Caco-2 (cell line): ENCODE measurements at regions of chr2 and their contacts with region 1.

Region 1: GRCh38 chr2:173965329-173966025 is at the start of gene SP3:
- DNase-seq: peak; percentile 97 to 98
- H3K4me3 ChIP-seq: peak within 1 kb of the TSS; percentile 98
- H3K4me3 Mint-ChIP-seq: peak within 1 kb of the TSS; percentile 98
- H3K27ac Mint-ChIP-seq: peak within 1 kb of the TSS; percentile 91
- H3K4me1 ChIP-seq: peaks cover 45% of the 10 kb centered on the region
- H3K4me1 Mint-ChIP-seq: peaks cover 39% of the 10 kb centered on the region
- H3K27me3 ChIP-seq: no peaks in the 10 kb centered on the region
- H3K27me3 Mint-ChIP-seq: no peaks in the 10 kb centered on the region
- CTCF ChIP-seq: no peak
- total RNA-seq, gene SP3: 108 and 111 TPM in 2 replicates

Region 2: DNA sequence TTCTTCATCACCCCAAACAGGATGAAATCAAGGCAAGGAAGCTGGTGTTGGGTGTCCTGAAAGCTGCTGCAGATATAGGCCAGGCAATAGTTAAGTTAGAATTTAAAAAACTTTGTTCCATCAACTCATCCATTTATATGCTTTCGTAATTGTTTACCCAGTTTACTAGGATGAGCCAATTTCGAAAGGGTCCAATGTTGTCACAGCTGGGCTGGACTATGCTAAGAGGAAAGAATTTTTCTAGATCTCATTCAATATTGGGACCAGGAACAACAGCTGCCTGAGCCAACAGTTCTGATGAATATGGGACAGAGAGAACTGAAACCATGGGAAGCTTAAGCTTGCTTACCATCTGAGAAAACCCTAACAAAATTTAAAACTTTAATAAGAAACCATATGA is 21.3 kb after region 1 on chr2:
- CTCF ChIA-PET with region 1: no interaction called
- POLR2A ChIA-PET with region 1: interaction called, 4 read pairs
- intact Hi-C with region 1: loop called (anchors 2 kb)
- DNase-seq: peak in 1 of 2 experiments; percentile 46
- H3K4me3 ChIP-seq: no peak overlapping the region
- H3K4me3 Mint-ChIP-seq: no peak overlapping the region
- H3K27ac Mint-ChIP-seq: peak overlapping the region; percentile 23
- H3K4me1 ChIP-seq: peaks cover 40% of the 10 kb centered on the region
- H3K4me1 Mint-ChIP-seq: peaks cover 40% of the 10 kb centered on the region
- H3K27me3 ChIP-seq: no peaks in the 10 kb centered on the region
- H3K27me3 Mint-ChIP-seq: no peaks in the 10 kb centered on the region
- CTCF ChIP-seq: no peak

Region 3: GRCh38 chr2:174033166-174033555 is 67.7 kb after region 1 on chr2:
- CTCF ChIA-PET with region 1: no interaction called
- POLR2A ChIA-PET with region 1: interaction called, 4 read pairs
- intact Hi-C with region 1: loop called (anchors 2 kb)
- DNase-seq: no peak
- H3K4me3 ChIP-seq: no peak overlapping the region
- H3K4me3 Mint-ChIP-seq: peak overlapping the region; percentile 60
- H3K27ac Mint-ChIP-seq: peak overlapping the region; percentile 97
- H3K4me1 ChIP-seq: peaks cover 60% of the 10 kb centered on the region
- H3K4me1 Mint-ChIP-seq: peaks cover 69% of the 10 kb centered on the region
- H3K27me3 ChIP-seq: no peaks in the 10 kb centered on the region
- H3K27me3 Mint-ChIP-seq: no peaks in the 10 kb centered on the region
- CTCF ChIP-seq: no peak

Region 4: GRCh38 chr2:174039551-174040416 is 74.3 kb after region 1 on chr2:
- CTCF ChIA-PET with region 1: no interaction called
- POLR2A ChIA-PET with region 1: no interaction called
- intact Hi-C with region 1: loop called (anchors 2 kb)
- DNase-seq: peak; percentile 87
- H3K4me3 ChIP-seq: no peak overlapping the region
- H3K4me3 Mint-ChIP-seq: no peak overlapping the region
- H3K27ac Mint-ChIP-seq: peak overlapping the region; percentile 40
- H3K4me1 ChIP-seq: peaks cover 23% of the 10 kb centered on the region
- H3K4me1 Mint-ChIP-seq: peaks cover 17% of the 10 kb centered on the region
- H3K27me3 ChIP-seq: no peaks in the 10 kb centered on the region
- H3K27me3 Mint-ChIP-seq: no peaks in the 10 kb centered on the region
- CTCF ChIP-seq: peak; percentile 78 to 82

Region 5: GRCh38 chr2:174051741-174052583 is 86.5 kb after region 1 on chr2:
- CTCF ChIA-PET with region 1: interaction called, 6 read pairs
- POLR2A ChIA-PET with region 1: interaction called, 12 read pairs
- intact Hi-C with region 1: loop called (anchors 1 kb)
- DNase-seq: peak; percentile 92 to 94
- H3K4me3 ChIP-seq: peak overlapping the region; percentile 1
- H3K4me3 Mint-ChIP-seq: peak overlapping the region; percentile 77
- H3K27ac Mint-ChIP-seq: peak overlapping the region; percentile 90
- H3K4me1 ChIP-seq: peaks cover 40% of the 10 kb centered on the region
- H3K4me1 Mint-ChIP-seq: peaks cover 34% of the 10 kb centered on the region
- H3K27me3 ChIP-seq: no peaks in the 10 kb centered on the region
- H3K27me3 Mint-ChIP-seq: no peaks in the 10 kb centered on the region
- CTCF ChIP-seq: no peak

Region 6: GRCh38 chr2:174078275-174078674 is 112.8 kb after region 1 on chr2:
- CTCF ChIA-PET with region 1: no interaction called
- POLR2A ChIA-PET with region 1: interaction called, 3 read pairs
- intact Hi-C with region 1: loop called (anchors 2 kb)
- DNase-seq: no peak
- H3K4me3 ChIP-seq: no peak overlapping the region
- H3K4me3 Mint-ChIP-seq: no peak overlapping the region
- H3K27ac Mint-ChIP-seq: peak overlapping the region; percentile 21
- H3K4me1 ChIP-seq: peaks cover 43% of the 10 kb centered on the region
- H3K4me1 Mint-ChIP-seq: peaks cover 40% of the 10 kb centered on the region
- H3K27me3 ChIP-seq: no peaks in the 10 kb centered on the region
- H3K27me3 Mint-ChIP-seq: no peaks in the 10 kb centered on the region
- CTCF ChIP-seq: peak in 1 of 2 experiments; percentile 36

Region 7: GRCh38 chr2:174145827-174146226 is 180.3 kb after region 1 on chr2:
- CTCF ChIA-PET with region 1: no interaction called
- POLR2A ChIA-PET with region 1: no interaction called
- intact Hi-C with region 1: no loop called
- DNase-seq: peak in 1 of 2 experiments; percentile 7
- H3K4me3 ChIP-seq: no peak overlapping the region
- H3K4me3 Mint-ChIP-seq: no peak overlapping the region
- H3K27ac Mint-ChIP-seq: no peak overlapping the region
- H3K4me1 ChIP-seq: no peaks in the 10 kb centered on the region
- H3K4me1 Mint-ChIP-seq: peaks cover 11% of the 10 kb centered on the region
- H3K27me3 ChIP-seq: no peaks in the 10 kb centered on the region
- H3K27me3 Mint-ChIP-seq: no peaks in the 10 kb centered on the region
- CTCF ChIP-seq: peak in 1 of 2 experiments; percentile 2

Region 8: DNA sequence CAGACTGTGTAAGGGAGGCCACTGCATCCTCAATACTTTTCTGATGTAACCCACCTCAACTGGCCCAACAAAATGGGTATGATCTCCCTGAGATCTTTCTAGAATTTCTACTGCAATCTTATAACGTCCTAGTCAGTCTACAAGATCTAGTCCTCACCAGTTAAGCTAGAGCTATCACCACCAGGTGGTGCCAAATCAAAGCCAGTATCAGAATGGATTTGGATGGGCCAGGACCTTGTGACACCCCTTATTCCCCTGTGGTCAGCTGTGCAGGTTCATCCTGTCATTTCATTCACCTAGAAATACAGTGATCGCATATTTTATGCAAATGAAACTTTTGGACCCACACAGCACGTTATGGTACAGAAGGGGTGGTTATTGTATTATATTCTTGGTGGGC is 192.5 kb after region 1 on chr2:
- CTCF ChIA-PET with region 1: no interaction called
- POLR2A ChIA-PET with region 1: no interaction called
- intact Hi-C with region 1: no loop called
- DNase-seq: peak; percentile 69 to 75
- H3K4me3 ChIP-seq: no peak overlapping the region
- H3K4me3 Mint-ChIP-seq: no peak overlapping the region
- H3K27ac Mint-ChIP-seq: no peak overlapping the region
- H3K4me1 ChIP-seq: no peaks in the 10 kb centered on the region
- H3K4me1 Mint-ChIP-seq: peaks cover 20% of the 10 kb centered on the region
- H3K27me3 ChIP-seq: no peaks in the 10 kb centered on the region
- H3K27me3 Mint-ChIP-seq: no peaks in the 10 kb centered on the region
- CTCF ChIP-seq: peak; percentile 56 to 80

Region 9: GRCh38 chr2:174248187-174248997 is 282.9 kb after region 1 on chr2 and contains the start of gene OLA1:
- CTCF ChIA-PET with region 1: no interaction called
- POLR2A ChIA-PET with region 1: no interaction called
- intact Hi-C with region 1: loop called (anchors 10 kb)
- DNase-seq: peak; percentile 96 to 99
- H3K4me3 ChIP-seq: peak within 1 kb of the TSS; percentile 88
- H3K4me3 Mint-ChIP-seq: peak within 1 kb of the TSS; percentile 92
- H3K27ac Mint-ChIP-seq: peak within 1 kb of the TSS; percentile 85
- H3K4me1 ChIP-seq: peaks cover 10% of the 10 kb centered on the region; the same call in 1 of the 2 replicates
- H3K4me1 Mint-ChIP-seq: peaks cover 12% of the 10 kb centered on the region
- H3K27me3 ChIP-seq: no peaks in the 10 kb centered on the region
- H3K27me3 Mint-ChIP-seq: no peaks in the 10 kb centered on the region
- CTCF ChIP-seq: no peak
- total RNA-seq, gene OLA1: 177 and 182 TPM in 2 replicates